Gastrocnemius medialis (tissue), 4 donors: ENCODE measurements at regions of chr6 and their contacts with region 1.

Region 1: DNA sequence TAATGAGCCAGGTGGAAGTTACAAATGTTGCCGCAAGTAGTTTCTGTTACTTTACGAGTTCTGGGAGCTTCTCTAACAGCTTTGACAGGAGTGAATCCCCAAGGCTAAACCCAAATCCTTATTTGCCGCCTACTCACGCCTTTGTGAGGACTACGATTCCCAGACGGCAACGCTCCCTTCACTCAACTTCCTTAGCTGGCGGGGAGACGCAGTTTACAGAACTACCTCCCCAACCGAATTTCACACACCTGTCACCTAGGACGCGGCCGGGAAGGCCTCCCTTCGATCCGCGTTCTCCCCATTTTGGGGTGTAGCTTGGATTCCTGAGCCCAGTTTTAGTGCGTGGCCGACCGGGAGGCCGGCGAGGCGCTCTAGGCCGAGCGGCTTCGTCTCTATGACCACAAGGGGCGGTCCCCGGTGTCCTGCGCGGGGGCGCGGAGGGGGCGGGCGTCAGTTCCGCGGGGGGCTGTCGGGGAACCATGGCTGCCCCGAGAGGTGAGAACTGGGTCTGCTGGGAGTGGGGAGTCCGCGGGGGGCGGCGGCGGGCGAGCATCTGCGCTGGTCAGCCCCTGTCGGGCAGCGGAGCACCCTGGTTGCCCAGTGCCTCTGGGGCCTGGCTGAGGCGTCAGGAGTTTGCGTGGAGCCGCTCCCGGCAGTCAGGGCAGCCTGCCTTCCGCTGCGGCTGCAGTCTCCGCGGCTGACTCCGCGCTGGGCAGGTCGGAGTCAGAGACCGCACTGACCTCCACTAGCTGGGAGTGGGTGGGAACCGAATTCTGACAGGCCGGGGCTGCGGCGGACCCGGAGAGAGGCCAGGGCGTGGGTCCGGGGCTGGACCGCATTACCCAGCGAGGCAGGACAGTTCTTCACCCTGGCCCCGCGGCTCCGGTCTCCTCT is at the start of gene SLC35A1:
- DNase-seq: peak; percentile 70 to 77
- ATAC-seq: peak; percentile 95 to 96
- H3K4me3 ChIP-seq: peak within 1 kb of the TSS; percentile 74 to 100 (median 90)
- H3K27ac ChIP-seq: peak within 1 kb of the TSS; percentile 89 to 98 (median 94)
- H3K4me1 ChIP-seq: peaks cover 7% of the 10 kb centered on the region in 2 donors
- H3K27me3 ChIP-seq: no peaks in the 10 kb centered on the region
- CTCF ChIP-seq: peak in 4 of 5 experiments; percentile 14 to 58 (median 33)
- POLR2A ChIP-seq: peak; percentile 60 to 61
- total RNA-seq, gene SLC35A1: 6.7 to 19.2 (median 11.2) TPM

Region 2: DNA sequence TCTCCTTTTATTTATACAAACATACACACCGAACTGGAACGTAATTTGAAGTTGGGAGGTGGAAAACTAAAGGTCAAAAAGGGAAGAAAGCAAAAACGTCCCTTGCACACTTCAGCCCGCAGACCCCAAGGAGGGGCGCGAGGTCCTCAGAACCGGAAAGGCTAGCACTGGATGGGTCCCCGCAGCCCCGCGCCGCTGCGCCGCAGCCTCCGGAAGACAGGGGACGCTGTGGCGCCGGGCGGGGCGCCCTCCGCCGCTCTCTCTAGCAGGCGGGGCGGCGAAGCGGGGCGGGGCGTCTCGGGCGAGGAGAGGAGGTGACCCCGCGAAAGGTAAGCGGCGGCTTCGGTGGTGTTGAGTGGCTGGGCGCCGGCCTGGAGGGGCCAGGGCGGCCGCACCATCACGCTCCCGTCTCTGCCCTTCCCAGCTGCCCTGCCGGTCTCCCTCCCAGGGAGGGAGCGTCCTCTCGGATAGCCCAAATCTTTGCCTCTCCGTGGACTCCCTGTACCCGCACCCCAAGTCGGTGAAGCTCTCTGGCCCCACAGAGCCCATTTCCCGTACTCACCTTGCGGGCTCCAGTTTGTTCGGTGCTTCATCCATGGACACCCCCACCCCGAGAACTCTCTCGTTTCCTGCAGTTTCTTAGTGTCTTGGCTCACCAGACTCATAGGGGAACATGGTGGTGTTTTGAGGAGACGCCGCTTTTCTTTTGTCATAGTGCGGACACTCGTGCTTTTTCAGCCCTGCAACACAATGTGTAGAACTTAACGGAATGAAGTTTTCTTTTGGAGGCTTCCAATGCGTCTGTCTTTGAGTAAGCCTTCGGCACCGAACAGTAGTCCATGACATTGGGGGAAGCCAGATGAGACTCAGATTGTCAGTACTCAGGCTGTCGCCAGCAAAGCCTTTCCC is 150.2 kb before region 1 on chr6 and contains the start of gene SMIM8:
- in situ Hi-C with region 1: no loop called
- intact Hi-C with region 1: loop called (anchors 1 kb)
- DNase-seq: peak; percentile 65 to 76
- ATAC-seq: peak; percentile 95 to 97
- H3K4me3 ChIP-seq: peak within 1 kb of the TSS; percentile 81 to 98 (median 90)
- H3K27ac ChIP-seq: peak within 1 kb of the TSS; percentile 82 to 90 (median 85)
- H3K4me1 ChIP-seq: peaks cover 0 to 3% of the 10 kb centered on the region in 2 donors
- H3K27me3 ChIP-seq: no peaks in the 10 kb centered on the region
- CTCF ChIP-seq: peak; percentile 87 to 99 (median 95)
- POLR2A ChIP-seq: peak in 1 of 2 donors; percentile 14
- total RNA-seq, gene SMIM8: 2.8 to 17.7 (median 6.9) TPM

Region 3: DNA sequence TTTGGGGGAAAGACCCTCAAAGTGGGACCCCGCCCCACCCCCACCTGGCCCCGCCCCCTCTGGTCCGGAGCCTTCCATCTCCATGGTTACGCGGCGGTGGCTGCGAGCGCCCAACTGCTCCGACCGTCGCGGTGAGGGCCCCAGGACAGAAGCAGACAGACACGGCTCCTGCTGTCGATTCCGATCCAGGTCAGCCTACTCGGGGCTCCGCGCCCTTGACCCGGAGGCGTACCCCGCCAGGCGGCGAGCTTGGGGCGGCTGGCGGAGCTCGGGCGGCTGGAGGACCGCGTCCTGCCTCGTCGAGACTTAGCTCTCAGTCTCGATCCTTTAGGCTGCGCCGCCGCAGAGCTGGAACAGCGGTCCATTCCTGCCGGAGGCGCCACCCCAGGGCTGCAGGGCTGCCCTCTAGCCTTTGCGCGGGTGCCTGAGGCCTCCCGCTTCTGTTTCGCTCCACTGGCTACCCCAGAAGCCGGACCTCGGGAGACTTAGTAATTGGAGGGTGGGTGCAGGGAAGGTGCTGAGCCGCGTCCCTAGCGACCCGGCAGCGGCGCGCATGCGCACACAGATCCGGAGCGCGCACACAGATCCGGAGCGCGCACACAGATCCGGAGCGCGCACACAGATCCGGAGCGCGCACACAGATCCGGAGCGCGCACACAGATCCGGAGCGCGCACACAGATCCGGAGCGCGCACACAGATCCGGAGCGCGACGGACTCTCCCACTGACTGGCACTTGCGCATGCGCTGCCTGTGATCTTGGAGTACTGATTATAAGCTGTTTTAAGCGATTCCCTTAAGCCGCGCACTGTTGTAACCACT is 64.7 kb before region 1 on chr6 and contains the start of gene CFAP206:
- in situ Hi-C with region 1: no loop called
- intact Hi-C with region 1: loop called (anchors 1 kb)
- DNase-seq: peak; percentile 58 to 63
- ATAC-seq: peak; percentile 87 to 88
- H3K4me3 ChIP-seq: peak within 1 kb of the TSS; percentile 72 to 98 (median 96)
- H3K27ac ChIP-seq: peak within 1 kb of the TSS; percentile 72 to 89 (median 81)
- H3K4me1 ChIP-seq: peaks cover 3 to 9% of the 10 kb centered on the region in 2 donors
- H3K27me3 ChIP-seq: no peaks in the 10 kb centered on the region
- CTCF ChIP-seq: no peak
- POLR2A ChIP-seq: no peak
- total RNA-seq, gene CFAP206: 0.20 to 1.6 TPM in 2 of 4 donors, not detected in the others